ENCODE measurements at regions of chr17 and their contacts with region 1.

Region 1: DNA sequence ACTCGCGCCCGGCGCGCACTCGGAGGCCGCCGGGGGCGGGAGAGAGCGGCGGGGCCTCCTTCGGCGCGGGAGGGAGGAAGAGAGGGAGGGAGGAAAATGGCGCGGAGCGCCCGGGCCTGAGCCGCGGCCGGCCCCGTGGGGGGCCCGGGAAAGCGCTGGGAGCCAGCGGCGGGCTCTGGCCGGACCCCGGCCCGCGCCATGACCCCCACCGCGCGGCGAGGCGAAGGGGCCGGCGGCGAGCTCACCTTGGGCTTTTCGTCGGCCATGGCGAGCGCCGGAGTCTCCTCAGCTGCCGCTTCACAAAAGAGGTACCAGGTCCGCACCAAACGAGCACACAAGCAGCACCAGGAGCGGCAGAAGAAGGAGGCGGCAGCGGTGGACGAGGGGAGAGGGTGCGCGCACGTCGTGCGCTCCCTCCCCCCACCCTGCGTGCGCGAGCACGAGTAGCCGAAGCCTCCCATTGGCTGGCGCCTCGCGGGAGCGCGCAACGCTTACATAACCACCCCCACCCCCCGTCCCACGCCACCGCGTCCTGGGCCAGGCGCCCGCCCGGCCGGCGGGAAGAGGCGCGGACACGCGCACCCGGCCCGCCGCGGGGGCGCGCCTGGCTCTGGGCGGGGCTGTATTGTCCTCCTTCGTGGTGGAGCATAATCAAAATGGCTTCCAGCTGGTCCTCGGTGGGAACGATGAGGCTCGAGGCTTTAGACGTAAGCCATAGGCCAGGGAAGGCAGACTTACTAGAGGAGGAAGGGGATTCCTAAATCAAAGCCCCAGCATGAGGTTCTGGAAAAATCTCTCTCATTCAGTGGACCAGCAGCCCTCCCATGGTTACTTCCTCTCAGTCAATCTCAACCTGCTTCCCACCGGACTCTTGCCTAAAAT is at the start of gene SUMO2:
- DNase-seq: peak; percentile 97
- ATAC-seq: peak; percentile 96
- total RNA-seq, gene SUMO2: 217 TPM

Region 2: DNA sequence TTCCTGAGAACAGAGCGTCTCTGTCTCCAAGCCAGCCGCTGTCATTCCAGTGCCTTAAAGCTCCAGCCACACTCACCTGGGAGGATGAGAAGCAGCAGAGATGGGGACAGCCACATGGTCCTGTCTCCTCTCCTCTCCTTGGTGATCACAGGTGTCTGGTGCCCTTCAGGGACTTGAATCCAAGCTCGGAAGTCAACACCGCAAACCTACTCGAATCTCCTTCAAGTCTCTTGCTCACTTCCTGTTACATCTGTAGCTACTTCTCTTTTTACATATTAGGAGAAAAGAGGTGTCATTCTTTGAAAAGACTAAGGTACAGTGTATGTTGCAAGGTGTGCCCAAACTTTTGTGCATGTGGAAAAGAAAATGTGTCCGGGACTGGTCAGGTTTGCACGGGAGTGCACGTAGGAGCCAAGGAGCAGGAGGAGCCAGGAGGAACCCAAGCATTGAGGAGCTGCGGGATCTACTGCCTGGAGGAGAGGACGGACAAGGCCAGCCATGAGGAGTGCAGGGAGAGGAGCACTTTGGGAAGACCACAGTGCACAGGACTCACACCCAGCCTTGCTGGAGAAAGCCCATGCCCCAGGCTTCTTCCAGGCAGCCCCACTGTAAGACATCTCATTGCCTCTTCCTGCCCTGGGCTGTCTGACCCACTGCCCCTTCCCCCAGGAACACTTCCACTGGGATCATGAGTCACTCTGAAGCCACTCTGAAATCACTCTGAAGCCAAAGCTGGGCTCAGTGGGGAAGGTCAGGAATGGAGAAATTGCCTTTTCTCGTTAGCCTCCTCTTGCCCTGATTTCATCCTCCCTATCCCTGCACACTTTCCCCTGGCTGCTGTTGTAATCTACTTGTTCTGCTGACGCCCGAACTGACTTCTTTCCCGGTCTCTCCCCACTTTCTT is 590.5 kb before region 1 on chr17 and contains the start of gene CD300LD:
- intact Hi-C with region 1: no loop called
- DNase-seq: no peak
- ATAC-seq: no peak
- total RNA-seq, gene CD300LD: not detected

Region 3: GRCh38 chr17:74981979-74982662 is 200.7 kb before region 1 on chr17:
- intact Hi-C with region 1: no loop called
- DNase-seq: peak; percentile 85
- ATAC-seq: peak; percentile 95

Region 4: DNA sequence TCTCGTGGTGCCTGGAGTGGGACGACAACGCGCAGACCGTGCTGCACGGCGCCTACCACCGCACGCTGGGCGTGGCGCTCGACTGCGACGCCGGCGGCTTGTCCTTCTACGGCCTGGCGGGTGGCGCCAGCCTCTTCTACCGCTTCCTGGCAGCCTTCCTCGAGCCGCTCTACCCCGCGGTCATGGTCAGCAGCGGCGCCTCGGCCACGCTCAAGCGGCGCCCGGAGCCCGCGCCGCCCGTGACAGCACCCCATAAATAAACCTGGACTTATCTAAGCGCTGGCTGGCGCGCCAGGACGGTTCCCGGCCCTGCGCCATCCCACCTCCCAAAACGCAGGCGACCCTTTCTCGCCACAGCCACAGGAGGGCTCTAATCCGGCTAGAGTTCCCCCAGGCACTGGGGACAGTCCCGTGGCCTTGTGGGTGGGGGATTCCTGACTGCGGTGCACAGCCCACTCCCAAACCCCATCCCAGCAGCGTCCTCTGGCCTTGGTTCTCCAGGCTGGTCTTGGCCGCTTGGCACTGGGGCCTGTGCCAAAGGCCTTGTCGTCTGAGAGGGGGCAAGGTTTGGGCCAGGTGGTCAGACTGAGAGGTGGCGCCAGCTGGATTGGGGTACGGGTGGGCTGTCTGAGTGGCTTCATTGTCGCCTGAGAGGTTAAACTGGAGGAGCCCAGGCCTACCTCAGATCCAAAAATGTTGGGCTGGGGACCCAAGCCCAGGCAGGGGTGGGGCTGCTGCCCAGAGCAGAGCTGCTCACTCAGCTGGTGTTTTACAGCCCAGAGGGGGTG is 105.1 kb before region 1 on chr17:
- intact Hi-C with region 1: no loop called
- DNase-seq: peak; percentile 91
- ATAC-seq: peak; percentile 91

Region 5: GRCh38 chr17:75205037-75205792 is 22.4 kb after region 1 on chr17 and contains the start of gene NUP85:
- intact Hi-C with region 1: loop called (anchors 2 kb)
- DNase-seq: peak; percentile 95
- ATAC-seq: peak; percentile 97
- total RNA-seq, gene NUP85: 28.7 TPM

Region 6: DNA sequence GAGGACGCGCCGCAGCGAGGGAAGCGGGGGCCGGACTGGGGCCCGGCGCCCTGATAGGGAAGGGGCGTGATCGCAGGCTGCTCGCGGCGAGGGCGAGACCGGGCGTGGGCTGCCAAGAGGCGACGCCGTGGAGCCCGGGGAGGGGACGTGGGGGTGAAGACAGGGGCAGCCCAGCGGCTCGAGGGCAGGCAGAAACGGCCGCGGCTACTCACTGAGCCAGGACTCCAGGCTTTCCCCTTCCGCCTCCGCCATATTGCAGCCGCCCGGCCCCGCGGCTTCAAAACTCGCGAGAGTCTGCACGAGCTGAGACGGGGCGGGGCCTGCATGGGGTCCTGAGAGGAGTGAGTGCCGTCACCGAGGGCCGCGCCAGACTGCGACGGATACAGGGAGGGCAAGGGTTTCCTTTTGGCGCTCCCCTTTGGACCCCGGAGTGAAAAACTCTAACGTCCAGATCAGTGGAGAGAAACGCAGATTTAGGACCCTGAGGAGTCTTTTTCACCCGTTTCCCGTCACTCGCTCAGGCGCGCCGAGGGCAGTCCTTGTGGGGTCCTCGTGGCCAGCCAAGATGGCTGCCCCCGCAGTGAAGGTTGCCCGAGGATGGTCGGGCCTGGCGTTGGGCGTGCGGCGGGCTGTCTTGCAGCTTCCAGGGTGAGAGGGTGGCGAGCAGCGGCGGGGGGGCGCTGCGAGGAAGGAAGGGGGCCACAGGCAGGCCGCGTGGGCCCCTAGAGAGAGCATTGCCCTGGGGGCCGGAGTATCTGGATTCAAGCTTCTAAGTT is 78.7 kb after region 1 on chr17 and contains the starts of genes GGA3 and MRPS7:
- intact Hi-C with region 1: loop called (anchors 5 kb)
- DNase-seq: peak; percentile 99
- ATAC-seq: peak; percentile 98
- total RNA-seq, gene GGA3: 25.1 TPM
- total RNA-seq, gene MRPS7: 123 TPM